ENCODE measurements at regions of chr6 and their contacts with region 1.

Region 1: DNA sequence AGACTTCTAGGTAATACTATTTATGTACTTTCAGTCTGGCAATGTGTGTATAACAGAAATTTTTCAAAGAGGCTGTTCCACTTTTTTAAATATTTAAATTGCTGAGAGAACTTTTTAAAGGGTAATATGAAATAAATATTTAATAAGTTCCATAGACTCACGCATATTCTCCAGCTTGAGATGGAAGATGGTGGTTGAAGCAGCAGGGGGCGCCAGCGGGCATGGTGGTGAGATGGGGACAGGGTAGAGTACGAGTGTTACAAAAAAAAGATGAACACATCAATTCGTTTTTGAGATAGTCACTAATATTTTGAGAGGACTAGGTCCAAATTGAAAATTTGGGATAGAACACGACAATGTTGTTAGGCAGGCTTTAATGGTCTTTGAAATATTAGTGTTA is 68.4 kb downstream of the RSPO3 start:
- DNase-seq: peak; percentile 24 to 67 (median 37)
- ATAC-seq: peak; percentile 94
- H3K4me3 ChIP-seq: no peak overlapping the region
- H3K27ac ChIP-seq: no peak overlapping the region
- H3K4me1 ChIP-seq: no peaks in the 10 kb centered on the region
- H3K27me3 ChIP-seq: no peaks in the 10 kb centered on the region
- CTCF ChIP-seq: peak; percentile 63 to 70 (median 69)
- EP300 ChIP-seq: no peak
- POLR2A ChIP-seq: no peak
- RAD21 ChIP-seq: peak; percentile 33 to 57; a peak in 3 of 4 replicates

Region 2: GRCh38 chr6:125995972-125996580 is 1190.8 kb before region 1 on chr6:
- CTCF ChIA-PET with region 1: no interaction called
- POLR2A ChIA-PET with region 1: no interaction called
- in situ Hi-C with region 1: no loop called
- intact Hi-C with region 1: loop called (anchors 10 kb)
- DNase-seq: peak; percentile 70 to 82 (median 74)
- ATAC-seq: peak; percentile 93
- H3K4me3 ChIP-seq: no peak overlapping the region
- H3K27ac ChIP-seq: no peak overlapping the region
- H3K4me1 ChIP-seq: peaks cover 0 to 4% of the 10 kb centered on the region in 2 experiments; a peak in 1 of 5 replicates
- H3K27me3 ChIP-seq: no peaks in the 10 kb centered on the region
- CTCF ChIP-seq: peak; percentile 85 to 97 (median 93)
- EP300 ChIP-seq: no peak
- POLR2A ChIP-seq: no peak
- RAD21 ChIP-seq: peak; percentile 80 to 88

Region 3: GRCh38 chr6:127173156-127173940 is 13.5 kb before region 1 on chr6:
- CTCF ChIA-PET with region 1: no interaction called
- POLR2A ChIA-PET with region 1: no interaction called
- in situ Hi-C with region 1: no loop called
- intact Hi-C with region 1: no loop called
- DNase-seq: no peak
- ATAC-seq: no peak
- H3K4me3 ChIP-seq: no peak overlapping the region
- H3K27ac ChIP-seq: no peak overlapping the region
- H3K4me1 ChIP-seq: no peaks in the 10 kb centered on the region
- H3K27me3 ChIP-seq: no peaks in the 10 kb centered on the region
- CTCF ChIP-seq: no peak
- EP300 ChIP-seq: no peak
- POLR2A ChIP-seq: no peak
- RAD21 ChIP-seq: no peak

Region 4: DNA sequence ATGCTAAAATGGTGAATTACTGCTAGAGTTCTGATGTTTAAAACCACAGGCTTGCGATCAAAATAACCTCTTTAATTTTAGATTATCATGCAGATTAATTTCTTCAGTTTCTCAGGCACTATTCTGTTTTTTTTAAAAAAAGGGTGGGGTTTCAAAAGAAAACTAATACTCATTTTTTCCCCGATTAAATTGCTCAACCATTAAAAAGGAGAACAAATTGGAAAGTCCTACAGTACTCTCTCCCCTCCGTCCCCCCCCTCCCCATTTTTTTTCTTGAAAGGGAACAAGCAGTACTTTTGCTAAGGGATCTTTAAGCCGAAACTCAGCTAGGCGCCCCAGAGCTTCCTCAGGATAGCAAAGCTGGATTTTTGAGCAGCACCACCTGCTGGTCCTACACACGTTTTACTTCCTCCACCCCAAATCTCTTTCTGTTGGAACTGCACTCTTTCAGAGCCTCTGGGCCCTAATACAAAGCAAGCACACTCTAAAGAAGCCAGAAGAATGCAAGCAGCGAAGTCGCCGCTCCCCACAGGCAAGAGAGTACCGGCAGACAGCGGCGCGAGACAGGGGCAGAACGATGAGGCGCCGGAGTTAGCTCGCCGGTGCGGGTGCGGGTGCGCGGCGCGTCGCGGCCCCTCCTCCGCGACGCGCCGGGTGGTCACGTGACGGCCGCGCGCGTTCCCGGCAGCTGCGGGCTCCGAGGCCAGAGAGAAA is 79.4 kb after region 1 on chr6 and contains the start of gene RNF146:
- CTCF ChIA-PET with region 1: no interaction called
- POLR2A ChIA-PET with region 1: no interaction called
- in situ Hi-C with region 1: no loop called
- intact Hi-C with region 1: loop called (anchors 5 kb)
- DNase-seq: peak; percentile 87 to 90 (median 88)
- ATAC-seq: peak; percentile 87
- H3K4me3 ChIP-seq: peak within 1 kb of the TSS; percentile 78
- H3K27ac ChIP-seq: peak within 1 kb of the TSS; percentile 88
- H3K4me1 ChIP-seq: peaks cover 0 to 8% of the 10 kb centered on the region in 2 experiments; a peak in 4 of 5 replicates
- H3K27me3 ChIP-seq: no peaks in the 10 kb centered on the region
- CTCF ChIP-seq: peak; percentile 76 to 81 (median 80)
- EP300 ChIP-seq: no peak
- POLR2A ChIP-seq: no peak
- RAD21 ChIP-seq: peak; percentile 6 to 50; a peak in 2 of 4 replicates
- polyA plus RNA-seq, gene RNF146: 8.4 to 14.7 TPM

Region 5: DNA sequence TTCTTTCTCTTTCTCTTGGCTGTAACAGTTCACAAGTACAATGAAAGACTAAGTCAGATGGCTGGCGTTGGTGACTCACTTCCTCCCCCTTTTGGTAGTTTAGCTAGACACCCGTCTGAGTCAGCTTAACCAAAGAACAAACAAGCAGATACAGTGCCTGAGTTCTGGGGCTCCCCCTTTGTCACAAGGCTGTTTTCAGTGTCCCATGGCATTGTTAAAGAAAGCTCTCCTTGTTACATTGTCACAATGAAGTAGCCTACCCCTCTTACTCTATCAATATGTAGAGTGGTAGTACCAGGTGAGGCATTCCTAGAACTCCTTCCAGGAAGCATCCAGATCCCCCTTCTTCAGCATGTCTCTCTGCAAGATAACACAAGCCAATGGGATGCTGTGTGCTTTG is 233.7 kb after region 1 on chr6:
- CTCF ChIA-PET with region 1: no interaction called
- POLR2A ChIA-PET with region 1: no interaction called
- in situ Hi-C with region 1: no loop called
- intact Hi-C with region 1: loop called (anchors 5 kb)
- DNase-seq: peak; percentile 29 to 80 (median 51)
- ATAC-seq: peak; percentile 97
- H3K4me3 ChIP-seq: no peak overlapping the region
- H3K27ac ChIP-seq: no peak overlapping the region
- H3K4me1 ChIP-seq: no peaks in the 10 kb centered on the region
- H3K27me3 ChIP-seq: no peaks in the 10 kb centered on the region; a peak in 1 of 5 replicates
- CTCF ChIP-seq: peak; percentile 65 to 75 (median 67)
- EP300 ChIP-seq: no peak
- POLR2A ChIP-seq: no peak
- RAD21 ChIP-seq: peak; percentile 72 to 83

Region 6: GRCh38 chr6:127539272-127539671 is 352.4 kb after region 1 on chr6:
- CTCF ChIA-PET with region 1: no interaction called
- POLR2A ChIA-PET with region 1: no interaction called
- in situ Hi-C with region 1: no loop called
- intact Hi-C with region 1: loop called (anchors 2 kb)
- DNase-seq: peak in 1 of 4 experiments; percentile 16
- ATAC-seq: 0 out of 3 replicates have a peak, but pooled peaks have one; percentile 47
- H3K4me3 ChIP-seq: no peak overlapping the region
- H3K27ac ChIP-seq: no peak overlapping the region
- H3K4me1 ChIP-seq: no peaks in the 10 kb centered on the region
- H3K27me3 ChIP-seq: no peaks in the 10 kb centered on the region
- CTCF ChIP-seq: peak in 1 of 3 experiments; percentile 43; a peak in 2 of 6 replicates
- EP300 ChIP-seq: no peak
- POLR2A ChIP-seq: no peak
- RAD21 ChIP-seq: peak; percentile 46 to 54

Measured in K562 (cell line).